SK-N-SH (cell line): ENCODE measurements at regions of chr15 and their contacts with region 1.

Region 1: DNA sequence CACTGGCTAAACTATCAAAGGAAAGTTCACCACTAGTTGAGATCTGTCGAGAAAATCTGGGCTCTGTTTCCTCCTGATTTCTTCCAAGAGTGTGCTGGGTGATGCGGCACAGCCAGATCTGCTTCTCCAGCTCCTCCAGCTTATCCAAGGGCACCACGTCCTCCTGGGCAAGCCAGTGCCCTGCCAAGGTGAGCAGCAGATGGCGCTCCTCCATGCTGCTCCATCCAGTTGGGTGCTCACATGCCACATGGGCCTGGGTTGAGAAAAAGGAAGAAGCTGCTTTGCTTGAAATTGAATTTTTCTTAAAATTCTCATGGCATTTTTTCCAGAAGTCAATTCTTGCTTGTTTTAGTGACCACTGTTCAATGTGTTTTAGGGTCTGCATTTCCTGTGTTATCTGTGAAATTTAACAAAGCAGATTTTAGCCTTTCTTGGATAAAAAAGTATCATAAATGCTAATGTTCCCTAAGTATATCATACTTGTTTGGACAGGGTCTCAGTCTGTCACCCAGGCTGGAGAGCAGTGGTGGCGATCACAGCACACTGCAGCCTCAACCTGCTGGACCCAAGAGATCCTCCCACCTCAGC is 47.3 kb downstream of the EIF3J start:
- DNase-seq: peak; percentile 43
- H3K4me3 ChIP-seq: no peak overlapping the region
- H3K27ac ChIP-seq: no peak overlapping the region
- H3K4me1 ChIP-seq: no peaks in the 10 kb centered on the region
- H3K27me3 ChIP-seq: no peaks in the 10 kb centered on the region
- CTCF ChIP-seq: peak; percentile 56
- EP300 ChIP-seq: no peak
- RAD21 ChIP-seq: peak; percentile 24; the same call in 1 of the 2 replicates

Region 2: DNA sequence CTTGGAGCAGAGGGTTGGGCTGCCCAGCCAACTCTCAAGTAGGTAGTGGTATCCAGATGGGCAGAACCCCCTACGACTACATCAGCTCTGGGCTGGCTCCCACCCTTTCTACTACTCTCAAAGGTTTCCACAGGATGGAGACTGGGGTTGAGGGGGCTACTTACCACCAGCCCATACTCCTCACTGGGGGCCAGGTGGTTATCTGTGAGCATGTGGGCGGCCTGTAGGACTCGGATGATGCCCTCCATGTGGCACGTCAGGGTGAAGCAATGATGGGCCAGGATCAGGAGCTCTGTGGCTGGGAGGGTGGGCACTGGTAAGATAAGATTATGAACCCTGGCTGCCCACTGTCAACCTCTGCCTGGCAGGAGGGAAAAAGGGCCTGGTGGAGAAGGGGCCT is 13.9 kb before region 1 on chr15:
- CTCF ChIA-PET with region 1: interaction called, 40 read pairs
- POLR2A ChIA-PET with region 1: no interaction called
- DNase-seq: no peak
- H3K4me3 ChIP-seq: no peak overlapping the region
- H3K27ac ChIP-seq: no peak overlapping the region
- H3K4me1 ChIP-seq: no peaks in the 10 kb centered on the region
- H3K27me3 ChIP-seq: no peaks in the 10 kb centered on the region
- CTCF ChIP-seq: no peak
- EP300 ChIP-seq: no peak
- RAD21 ChIP-seq: no peak

Region 3: GRCh38 chr15:44598892-44599291 is 14.6 kb after region 1 on chr15:
- CTCF ChIA-PET with region 1: interaction called, 23 read pairs
- POLR2A ChIA-PET with region 1: no interaction called
- DNase-seq: no peak
- H3K4me3 ChIP-seq: no peak overlapping the region
- H3K27ac ChIP-seq: peak overlapping the region; percentile 5 to 69; a peak in 3 of 4 replicates
- H3K4me1 ChIP-seq: peaks cover 0 to 21% of the 10 kb centered on the region in 2 experiments; a peak in 1 of 4 replicates
- H3K27me3 ChIP-seq: no peaks in the 10 kb centered on the region
- CTCF ChIP-seq: no peak
- EP300 ChIP-seq: no peak
- RAD21 ChIP-seq: no peak

Region 4: DNA sequence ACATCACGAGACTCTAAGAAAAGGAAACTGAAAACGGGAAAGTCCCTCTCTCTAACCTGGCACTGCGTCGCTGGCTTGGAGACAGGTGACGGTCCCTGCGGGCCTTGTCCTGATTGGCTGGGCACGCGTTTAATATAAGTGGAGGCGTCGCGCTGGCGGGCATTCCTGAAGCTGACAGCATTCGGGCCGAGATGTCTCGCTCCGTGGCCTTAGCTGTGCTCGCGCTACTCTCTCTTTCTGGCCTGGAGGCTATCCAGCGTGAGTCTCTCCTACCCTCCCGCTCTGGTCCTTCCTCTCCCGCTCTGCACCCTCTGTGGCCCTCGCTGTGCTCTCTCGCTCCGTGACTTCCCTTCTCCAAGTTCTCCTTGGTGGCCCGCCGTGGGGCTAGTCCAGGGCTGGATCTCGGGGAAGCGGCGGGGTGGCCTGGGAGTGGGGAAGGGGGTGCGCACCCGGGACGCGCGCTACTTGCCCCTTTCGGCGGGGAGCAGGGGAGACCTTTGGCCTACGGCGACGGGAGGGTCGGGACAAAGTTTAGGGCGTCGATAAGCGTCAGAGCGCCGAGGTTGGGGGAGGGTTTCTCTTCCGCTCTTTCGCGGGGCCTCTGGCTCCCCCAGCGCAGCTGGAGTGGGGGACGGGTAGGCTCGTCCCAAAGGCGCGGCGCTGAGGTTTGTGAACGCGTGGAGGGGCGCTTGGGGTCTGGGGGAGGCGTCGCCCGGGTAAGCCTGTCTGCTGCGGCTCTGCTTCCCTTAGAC is 127.3 kb after region 1 on chr15 and contains the start of gene B2M:
- CTCF ChIA-PET with region 1: interaction called, 10 read pairs
- POLR2A ChIA-PET with region 1: no interaction called
- DNase-seq: peak; percentile 93
- H3K4me3 ChIP-seq: peak within 1 kb of the TSS; percentile 74 to 99
- H3K27ac ChIP-seq: peak within 1 kb of the TSS; percentile 88 to 89
- H3K4me1 ChIP-seq: no peaks in the 10 kb centered on the region; a peak in 1 of 4 replicates
- H3K27me3 ChIP-seq: no peaks in the 10 kb centered on the region
- CTCF ChIP-seq: no peak
- EP300 ChIP-seq: no peak
- RAD21 ChIP-seq: no peak
- polyA plus RNA-seq, gene B2M: 1,193 and 2,153 TPM in 2 replicates